ENCODE measurements at regions of chr2 and their contacts with region 1.

Region 1: GRCh38 chr2:187383043-187383800 is 64.8 kb downstream of the CALCRL start:
- DNase-seq: peak; percentile 55
- H3K4me3 ChIP-seq: no peak overlapping the region
- H3K27ac ChIP-seq: no peak overlapping the region
- H3K4me1 ChIP-seq: peaks cover 10% of the 10 kb centered on the region
- H3K27me3 ChIP-seq: no peaks in the 10 kb centered on the region
- CTCF ChIP-seq: no peak
- POLR2A ChIP-seq: no peak

Region 2: DNA sequence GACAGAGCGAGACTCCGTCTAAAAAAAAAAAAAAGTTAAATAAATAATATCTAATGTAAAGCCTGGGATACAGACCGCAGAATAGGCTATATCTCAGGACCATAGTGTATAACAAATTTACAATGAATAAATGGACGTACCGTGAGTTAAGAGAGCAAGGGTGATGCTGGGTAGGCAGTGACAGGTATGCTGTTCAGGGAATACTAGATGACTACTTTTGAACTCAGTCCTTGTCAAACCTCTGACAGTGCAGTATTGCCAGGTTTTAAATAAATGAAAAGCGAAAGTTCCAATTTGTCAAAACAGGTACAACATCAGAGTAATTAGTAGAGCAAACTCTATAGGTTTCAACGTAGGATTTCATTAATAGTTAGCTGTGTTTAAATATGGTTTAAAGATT is 12.0 kb before region 1 on chr2:
- CTCF ChIA-PET with region 1: interaction called, 3 read pairs
- POLR2A ChIA-PET with region 1: no interaction called
- dilution Hi-C with region 1: no loop called
- intact Hi-C with region 1: loop called (anchors 2 kb)
- DNase-seq: no peak
- H3K4me3 ChIP-seq: no peak overlapping the region
- H3K27ac ChIP-seq: no peak overlapping the region
- H3K4me1 ChIP-seq: peaks cover 27% of the 10 kb centered on the region
- H3K27me3 ChIP-seq: no peaks in the 10 kb centered on the region
- CTCF ChIP-seq: no peak
- POLR2A ChIP-seq: no peak

Region 3: GRCh38 chr2:188937228-188938220 is 1554.3 kb after region 1 on chr2:
- CTCF ChIA-PET with region 1: no interaction called
- POLR2A ChIA-PET with region 1: no interaction called
- dilution Hi-C with region 1: no loop called
- intact Hi-C with region 1: no loop called
- DNase-seq: peak; percentile 72
- H3K4me3 ChIP-seq: no peak overlapping the region
- H3K27ac ChIP-seq: no peak overlapping the region
- H3K4me1 ChIP-seq: peaks cover 5% of the 10 kb centered on the region
- H3K27me3 ChIP-seq: no peaks in the 10 kb centered on the region
- CTCF ChIP-seq: no peak
- POLR2A ChIP-seq: no peak

Measured in endothelial cell of umbilical vein (primary cell).